ENCODE measurements at regions of chr14 and their contacts with region 1.

Region 1: DNA sequence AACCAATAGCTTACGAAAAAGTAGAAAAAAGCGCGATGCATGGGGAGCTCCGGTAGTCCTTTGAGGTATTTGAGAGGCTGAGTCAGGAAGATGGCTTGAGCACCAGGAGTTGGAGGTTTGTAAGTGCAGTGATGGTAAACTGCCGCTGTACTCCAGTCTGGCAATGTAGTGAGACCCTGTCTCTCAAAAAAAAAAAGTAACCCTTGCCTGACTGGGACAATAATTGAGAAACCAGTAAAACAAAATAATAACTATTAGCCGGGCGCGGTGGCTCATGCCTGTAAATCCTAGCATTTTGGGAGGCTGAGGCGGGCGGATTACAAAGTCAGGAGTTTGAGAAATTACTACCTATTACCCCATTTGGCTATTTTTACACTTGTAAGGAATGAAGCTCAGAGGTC is 632 bp upstream of the ACOT2 start:
- DNase-seq: peak in 1 of 35 experiments; percentile 41
- ATAC-seq: no peak
- H3K4me3 ChIP-seq: peak overlapping the region; percentile 74 to 82
- H3K4me3 Mint-ChIP-seq: peak overlapping the region; percentile 86 to 93 (median 93)
- H3K27ac ChIP-seq: peak overlapping the region; percentile 80
- H3K27ac Mint-ChIP-seq: peak overlapping the region; percentile 93 to 94
- H3K4me1 ChIP-seq: peaks cover 4 to 48% of the 10 kb centered on the region in 2 experiments
- H3K4me1 Mint-ChIP-seq: peaks cover 41 to 51% (median 50%) of the 10 kb centered on the region in 3 donors
- H3K27me3 ChIP-seq: no peaks in the 10 kb centered on the region
- H3K27me3 Mint-ChIP-seq: no peaks in the 10 kb centered on the region

Region 2: DNA sequence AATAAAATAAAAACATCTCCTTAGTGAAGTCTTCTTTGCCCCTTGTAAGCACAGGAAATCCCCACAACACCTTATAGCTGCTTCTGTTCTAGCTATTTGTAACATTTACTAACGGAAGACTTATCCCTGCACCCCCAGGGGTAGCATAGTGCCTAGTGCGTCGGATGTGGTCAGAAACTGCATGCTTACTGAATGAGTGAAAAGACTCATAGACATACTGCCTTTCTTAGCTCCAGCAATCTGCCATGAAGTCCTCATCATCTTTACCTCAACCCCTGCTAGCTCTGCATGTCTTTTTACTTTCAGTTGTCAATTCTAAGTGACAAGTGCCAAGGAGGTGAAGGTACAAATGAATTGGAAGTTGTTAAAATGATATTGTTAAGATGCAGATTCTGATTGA is 64.7 kb before region 1 on chr14:
- CTCF ChIA-PET with region 1: interaction called, 13 to 35 read pairs
- POLR2A ChIA-PET with region 1: interaction called in 1 of 2 experiments, 3 read pairs
- DNase-seq: peak in 3 of 35 experiments; percentile 6 to 28 (median 14)
- ATAC-seq: peak in 1 of 4 experiments; percentile 56
- H3K4me3 ChIP-seq: no peak overlapping the region
- H3K4me3 Mint-ChIP-seq: no peak overlapping the region
- H3K27ac ChIP-seq: no peak overlapping the region
- H3K27ac Mint-ChIP-seq: no peak overlapping the region
- H3K4me1 ChIP-seq: no peaks in the 10 kb centered on the region
- H3K4me1 Mint-ChIP-seq: peaks cover 0 to 7% (median 3%) of the 10 kb centered on the region in 3 donors
- H3K27me3 ChIP-seq: no peaks in the 10 kb centered on the region
- H3K27me3 Mint-ChIP-seq: no peaks in the 10 kb centered on the region

Region 3: DNA sequence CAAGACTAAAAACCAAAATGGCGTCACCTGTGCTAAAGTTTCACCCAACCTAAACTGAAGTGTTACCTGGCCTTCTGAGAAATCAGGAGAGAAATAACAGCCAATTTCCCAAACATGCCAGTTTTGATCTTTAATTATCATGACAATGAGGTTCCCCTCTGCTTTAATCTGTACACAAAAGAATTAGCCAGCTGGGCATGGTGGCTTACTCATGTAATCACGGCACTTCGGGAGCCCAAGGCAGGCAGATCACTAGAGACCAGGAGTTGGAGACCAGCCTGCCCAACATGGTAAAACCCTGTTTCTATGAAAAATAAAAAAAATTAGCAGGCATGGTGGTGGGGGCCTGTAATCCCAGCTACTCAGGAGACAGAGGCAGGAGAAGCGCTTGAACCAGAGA is 14.5 kb before region 1 on chr14:
- CTCF ChIA-PET with region 1: no interaction called
- POLR2A ChIA-PET with region 1: no interaction called
- DNase-seq: no peak
- ATAC-seq: no peak
- H3K4me3 ChIP-seq: no peak overlapping the region
- H3K4me3 Mint-ChIP-seq: no peak overlapping the region
- H3K27ac ChIP-seq: no peak overlapping the region
- H3K27ac Mint-ChIP-seq: no peak overlapping the region
- H3K4me1 ChIP-seq: no peaks in the 10 kb centered on the region
- H3K4me1 Mint-ChIP-seq: no peaks in the 10 kb centered on the region
- H3K27me3 ChIP-seq: no peaks in the 10 kb centered on the region
- H3K27me3 Mint-ChIP-seq: no peaks in the 10 kb centered on the region

Region 4: DNA sequence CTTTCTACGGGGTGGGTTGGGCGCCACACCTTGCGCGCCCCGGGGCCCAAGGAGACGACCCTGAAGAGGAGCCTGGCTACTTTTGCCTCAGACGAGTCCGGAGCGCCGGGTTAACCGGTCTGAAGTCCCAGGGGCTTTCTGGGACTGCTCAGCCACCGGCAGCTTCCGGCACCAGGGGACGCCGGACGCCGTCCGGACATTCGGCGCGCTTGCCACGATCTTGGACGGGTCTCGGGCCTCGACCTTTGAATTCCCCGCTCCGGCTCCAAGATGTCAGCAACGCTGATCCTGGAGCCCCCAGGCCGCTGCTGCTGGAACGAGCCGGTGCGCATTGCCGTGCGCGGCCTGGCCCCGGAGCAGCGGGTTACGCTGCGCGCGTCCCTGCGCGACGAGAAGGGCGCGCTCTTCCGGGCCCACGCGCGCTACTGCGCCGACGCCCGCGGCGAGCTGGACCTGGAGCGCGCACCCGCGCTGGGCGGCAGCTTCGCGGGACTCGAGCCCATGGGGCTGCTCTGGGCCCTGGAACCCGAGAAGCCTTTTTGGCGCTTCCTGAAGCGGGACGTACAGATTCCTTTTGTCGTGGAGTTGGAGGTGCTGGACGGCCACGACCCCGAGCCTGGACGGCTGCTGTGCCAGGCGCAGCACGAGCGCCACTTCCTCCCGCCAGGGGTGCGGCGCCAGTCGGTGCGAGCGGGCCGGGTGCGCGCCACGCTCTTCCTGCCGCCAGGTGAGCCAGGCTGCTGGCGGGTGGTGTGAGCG is 23.5 kb after region 1 on chr14 and contains the start of gene ACOT4:
- CTCF ChIA-PET with region 1: interaction called in 1 of 2 experiments, 3 read pairs
- POLR2A ChIA-PET with region 1: interaction called, 3 to 13 read pairs
- DNase-seq: peak; percentile 24 to 77 (median 51)
- ATAC-seq: peak; percentile 89 to 90 (median 90)
- H3K4me3 ChIP-seq: peak within 1 kb of the TSS; percentile 74 to 84
- H3K4me3 Mint-ChIP-seq: peak within 1 kb of the TSS; percentile 71 to 73 (median 72)
- H3K27ac ChIP-seq: peak within 1 kb of the TSS; percentile 83
- H3K27ac Mint-ChIP-seq: peak within 1 kb of the TSS; percentile 52 to 72
- H3K4me1 ChIP-seq: peaks cover 0 to 11% of the 10 kb centered on the region in 2 experiments
- H3K4me1 Mint-ChIP-seq: peaks cover 0 to 9% (median 8%) of the 10 kb centered on the region in 3 donors
- H3K27me3 ChIP-seq: no peaks in the 10 kb centered on the region
- H3K27me3 Mint-ChIP-seq: no peaks in the 10 kb centered on the region
- total RNA-seq, gene ACOT4: 0.55 to 1.6 (median 1.2) TPM

Region 5: DNA sequence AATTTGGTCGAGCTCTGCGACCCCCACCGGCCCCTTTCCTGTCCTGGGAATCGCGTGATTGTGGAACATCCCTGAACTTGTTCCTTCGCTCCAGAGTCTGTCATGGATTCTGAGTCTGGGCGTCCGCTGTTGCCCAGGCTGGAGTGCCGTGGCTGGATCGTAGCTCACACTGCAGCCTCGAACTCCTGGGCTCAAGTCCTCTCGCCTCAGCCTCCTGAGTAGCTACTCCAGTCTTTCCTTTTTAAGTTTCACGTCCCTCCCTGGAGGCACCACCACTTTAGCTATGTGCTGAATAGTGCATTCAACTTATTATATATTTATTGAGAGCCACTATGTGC is 44.6 kb after region 1 on chr14:
- CTCF ChIA-PET with region 1: interaction called, 3 to 17 read pairs
- POLR2A ChIA-PET with region 1: interaction called, 3 to 9 read pairs
- DNase-seq: no peak
- ATAC-seq: peak; percentile 5 to 21 (median 12)
- H3K4me3 ChIP-seq: peak overlapping the region; percentile 63 to 72
- H3K4me3 Mint-ChIP-seq: peak overlapping the region; percentile 80 to 88 (median 85)
- H3K27ac ChIP-seq: peak overlapping the region; percentile 49
- H3K27ac Mint-ChIP-seq: peak overlapping the region; percentile 83 to 92
- H3K4me1 ChIP-seq: peaks cover 0 to 10% of the 10 kb centered on the region in 2 experiments
- H3K4me1 Mint-ChIP-seq: peaks cover 5 to 6% (median 6%) of the 10 kb centered on the region in 3 donors
- H3K27me3 ChIP-seq: no peaks in the 10 kb centered on the region
- H3K27me3 Mint-ChIP-seq: no peaks in the 10 kb centered on the region

Region 6: GRCh38 chr14:73789691-73790581 is 221.6 kb after region 1 on chr14:
- CTCF ChIA-PET with region 1: no interaction called
- POLR2A ChIA-PET with region 1: no interaction called
- DNase-seq: no peak
- ATAC-seq: no peak
- H3K4me3 ChIP-seq: no peak overlapping the region
- H3K4me3 Mint-ChIP-seq: no peak overlapping the region
- H3K27ac ChIP-seq: no peak overlapping the region
- H3K27ac Mint-ChIP-seq: peak overlapping the region; percentile 61 to 65
- H3K4me1 ChIP-seq: peaks cover 24 to 31% of the 10 kb centered on the region in 2 experiments
- H3K4me1 Mint-ChIP-seq: peaks cover 33 to 42% (median 41%) of the 10 kb centered on the region in 3 donors
- H3K27me3 ChIP-seq: no peaks in the 10 kb centered on the region
- H3K27me3 Mint-ChIP-seq: no peaks in the 10 kb centered on the region